ENCODE measurements at regions of chr19 and their contacts with region 1.

Region 1: GRCh38 chr19:13880059-13881043 is 3.4 kb downstream of the NANOS3 start:
- DNase-seq: peak; percentile 93
- ATAC-seq: peak; percentile 99
- H3K4me3 ChIP-seq: no peak overlapping the region
- H3K27ac ChIP-seq: peak overlapping the region; percentile 23
- H3K4me1 ChIP-seq: peaks cover 19% of the 10 kb centered on the region
- H3K27me3 ChIP-seq: peaks cover 2% of the 10 kb centered on the region; the same call in 1 of the 2 replicates
- CTCF ChIP-seq: peak; percentile 100
- POLR2A ChIP-seq: peak; percentile 53; the same call in 1 of the 2 replicates
- RAD21 ChIP-seq: peak; percentile 99

Region 2: DNA sequence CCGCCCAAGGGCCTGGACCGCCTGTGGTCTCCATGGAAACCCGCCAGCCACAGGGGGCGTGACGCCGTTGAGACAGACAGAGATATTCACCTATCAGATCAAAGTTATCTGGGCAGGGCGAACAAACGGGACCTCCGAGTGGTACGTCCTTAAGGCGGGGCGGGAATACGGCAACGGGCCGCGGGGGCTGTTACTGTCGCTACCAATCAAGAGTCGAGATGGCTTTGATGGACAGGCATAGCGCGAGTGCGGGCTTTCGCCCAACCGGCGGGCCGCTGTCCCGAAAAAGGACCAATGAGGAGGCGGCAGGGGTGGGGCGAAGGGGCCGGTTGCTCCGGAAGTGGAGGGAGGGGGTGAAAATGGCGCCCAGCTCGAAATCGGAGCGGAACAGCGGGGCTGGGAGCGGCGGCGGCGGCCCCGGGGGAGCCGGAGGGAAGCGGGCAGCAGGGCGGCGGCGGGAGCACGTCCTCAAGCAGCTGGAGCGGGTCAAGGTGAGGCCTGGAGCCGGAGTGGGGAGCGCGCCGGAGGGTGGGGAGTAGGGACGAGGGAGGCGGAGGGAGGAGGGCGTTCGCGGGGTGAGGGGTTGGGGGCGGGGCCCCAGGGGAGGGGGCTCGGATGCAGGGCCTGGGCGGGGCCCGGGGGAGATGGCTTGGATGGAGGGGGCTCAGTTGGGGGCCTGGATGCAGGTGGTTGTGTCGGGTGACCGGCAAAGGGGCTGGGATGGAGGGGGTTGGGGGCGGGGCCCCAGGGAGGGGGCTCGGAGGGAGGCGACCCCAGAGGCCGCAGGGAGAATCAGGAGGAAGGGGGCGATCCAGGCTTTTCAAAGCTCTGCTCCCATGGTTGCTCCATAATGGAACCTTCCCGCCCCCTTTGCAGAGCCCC is 72.0 kb after region 1 on chr19 and contains the start of gene DCAF15:
- CTCF ChIA-PET with region 1: interaction called, 5 read pairs
- POLR2A ChIA-PET with region 1: no interaction called
- dilution Hi-C with region 1: no loop called
- in situ Hi-C with region 1: no loop called
- intact Hi-C with region 1: loop called (anchors 2 kb)
- DNase-seq: peak; percentile 99
- ATAC-seq: peak; percentile 99
- H3K4me3 ChIP-seq: peak within 1 kb of the TSS; percentile 60
- H3K27ac ChIP-seq: peak within 1 kb of the TSS; percentile 82
- H3K4me1 ChIP-seq: peaks cover 3% of the 10 kb centered on the region; the same call in 1 of the 2 replicates
- H3K27me3 ChIP-seq: no peaks in the 10 kb centered on the region
- CTCF ChIP-seq: no peak
- POLR2A ChIP-seq: peak; percentile 47; the same call in 1 of the 2 replicates
- RAD21 ChIP-seq: no peak
- total RNA-seq, gene DCAF15: 6.8 and 7.5 TPM in 2 replicates

Region 3: GRCh38 chr19:14136509-14137281 is 256.3 kb after region 1 on chr19 and contains the start of gene ASF1B:
- CTCF ChIA-PET with region 1: no interaction called
- POLR2A ChIA-PET with region 1: no interaction called
- dilution Hi-C with region 1: no loop called
- in situ Hi-C with region 1: no loop called
- intact Hi-C with region 1: loop called (anchors 2 kb)
- DNase-seq: peak; percentile 100
- ATAC-seq: peak; percentile 91
- H3K4me3 ChIP-seq: peak within 1 kb of the TSS; percentile 66
- H3K27ac ChIP-seq: peak within 1 kb of the TSS; percentile 53
- H3K4me1 ChIP-seq: peaks cover 6% of the 10 kb centered on the region
- H3K27me3 ChIP-seq: no peaks in the 10 kb centered on the region
- CTCF ChIP-seq: peak; percentile 98
- POLR2A ChIP-seq: peak; percentile 80
- RAD21 ChIP-seq: peak; percentile 87
- total RNA-seq, gene ASF1B: 10.4 and 13.1 TPM in 2 replicates

Region 4: GRCh38 chr19:14347999-14348889 is 467.9 kb after region 1 on chr19:
- CTCF ChIA-PET with region 1: no interaction called
- POLR2A ChIA-PET with region 1: no interaction called
- dilution Hi-C with region 1: no loop called
- in situ Hi-C with region 1: loop called (anchors 25 kb)
- intact Hi-C with region 1: no loop called
- DNase-seq: no peak
- ATAC-seq: peak; percentile 98
- H3K4me3 ChIP-seq: no peak overlapping the region
- H3K27ac ChIP-seq: no peak overlapping the region
- H3K4me1 ChIP-seq: no peaks in the 10 kb centered on the region
- H3K27me3 ChIP-seq: peaks cover 41% of the 10 kb centered on the region
- CTCF ChIP-seq: peak; percentile 94
- POLR2A ChIP-seq: no peak
- RAD21 ChIP-seq: peak; percentile 96

Region 5: GRCh38 chr19:14479975-14480699 is 599.8 kb after region 1 on chr19:
- CTCF ChIA-PET with region 1: no interaction called
- POLR2A ChIA-PET with region 1: no interaction called
- dilution Hi-C with region 1: no loop called
- in situ Hi-C with region 1: loop called (anchors 10 kb)
- intact Hi-C with region 1: loop called (anchors 10 kb)
- DNase-seq: peak; percentile 20
- ATAC-seq: peak; percentile 38
- H3K4me3 ChIP-seq: no peak overlapping the region
- H3K27ac ChIP-seq: peak overlapping the region; percentile 4; the same call in 1 of the 2 replicates
- H3K4me1 ChIP-seq: peaks cover 30% of the 10 kb centered on the region
- H3K27me3 ChIP-seq: no peaks in the 10 kb centered on the region
- CTCF ChIP-seq: peak; percentile 69
- POLR2A ChIP-seq: no peak
- RAD21 ChIP-seq: peak; percentile 46

Measured in IMR-90 (cell line).